Activated CD4-positive, alpha-beta memory T cell treated with anti-CD3 and anti-CD28 coated beads for 36 hours (primary cell): ENCODE measurements at regions of chr1 and their contacts with region 1.

Region 1: GRCh38 chr1:229661022-229661877 is 35.2 kb downstream of the URB2 start:
- DNase-seq: peak; percentile 83
- H3K4me3 Mint-ChIP-seq: no peak overlapping the region
- H3K27ac Mint-ChIP-seq: no peak overlapping the region
- H3K4me1 Mint-ChIP-seq: peaks cover 19% of the 10 kb centered on the region
- H3K27me3 Mint-ChIP-seq: no peaks in the 10 kb centered on the region

Region 2: DNA sequence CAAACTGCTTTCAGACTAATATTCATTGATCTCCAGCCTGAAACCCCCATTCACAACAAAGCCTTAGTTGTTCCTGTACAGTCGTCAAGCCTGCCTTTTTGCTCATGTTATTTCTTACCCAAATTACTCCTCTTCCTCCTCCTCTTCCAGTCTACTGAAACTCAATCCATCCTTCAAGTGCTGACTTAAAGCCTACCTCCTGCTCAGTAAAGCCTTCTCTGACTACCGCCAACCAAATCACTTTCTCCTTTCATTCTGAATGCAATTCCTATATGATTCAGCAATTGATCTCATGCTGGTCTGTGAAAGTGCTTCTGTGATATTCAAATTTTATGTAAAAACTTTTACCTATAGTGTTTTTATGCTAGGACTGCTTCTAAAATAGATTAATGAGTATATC is 53.9 kb before region 1 on chr1:
- CTCF ChIA-PET with region 1: no interaction called
- POLR2A ChIA-PET with region 1: no interaction called
- intact Hi-C with region 1: no loop called
- DNase-seq: no peak
- H3K4me3 Mint-ChIP-seq: no peak overlapping the region
- H3K27ac Mint-ChIP-seq: no peak overlapping the region
- H3K4me1 Mint-ChIP-seq: peaks cover 12% of the 10 kb centered on the region
- H3K27me3 Mint-ChIP-seq: no peaks in the 10 kb centered on the region

Region 3: GRCh38 chr1:229625915-229626831 is 35.1 kb before region 1 on chr1 and contains the starts of genes TAF5L and URB2:
- CTCF ChIA-PET with region 1: interaction called, 5 read pairs
- POLR2A ChIA-PET with region 1: no interaction called
- intact Hi-C with region 1: loop called (anchors 2 kb)
- DNase-seq: peak; percentile 91
- H3K4me3 Mint-ChIP-seq: peak within 1 kb of the TSS; percentile 99
- H3K27ac Mint-ChIP-seq: peak within 1 kb of the TSS; percentile 89
- H3K4me1 Mint-ChIP-seq: peaks cover 65% of the 10 kb centered on the region
- H3K27me3 Mint-ChIP-seq: no peaks in the 10 kb centered on the region
- total RNA-seq, gene TAF5L: 14.1 to 17.8 TPM
- total RNA-seq, gene URB2: 13.8 to 14.6 TPM

Region 4: DNA sequence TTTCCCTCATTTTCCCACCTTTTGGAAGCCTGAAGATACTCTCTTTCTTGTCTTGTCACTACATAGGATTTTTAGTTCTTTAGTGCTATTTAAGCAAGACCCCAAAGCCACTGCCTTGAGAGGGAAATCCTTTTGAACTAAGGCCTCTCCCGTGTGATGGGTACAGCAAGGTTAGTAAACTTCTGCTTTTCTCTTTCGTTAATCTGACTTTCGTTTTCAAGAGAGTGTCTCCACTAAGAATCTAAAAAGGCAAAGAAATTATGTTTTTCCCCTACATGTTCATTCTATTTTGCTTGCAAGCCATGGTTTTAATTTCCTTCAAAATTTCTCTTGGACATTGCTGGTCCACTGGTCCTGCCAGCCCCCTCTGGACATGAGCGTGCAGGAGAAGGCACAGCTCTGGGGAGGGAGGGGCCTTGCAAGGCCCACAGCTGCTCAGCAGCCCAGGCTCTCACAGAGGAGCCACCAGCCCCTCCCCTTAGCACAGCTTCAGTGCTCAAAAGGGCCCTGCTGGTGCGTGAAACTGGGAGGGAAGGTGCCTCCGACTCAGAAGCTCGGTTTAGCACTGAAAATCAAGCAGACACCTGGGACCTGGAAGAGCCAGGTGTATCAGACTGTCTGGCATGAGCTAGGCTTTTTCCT is 194.9 kb after region 1 on chr1:
- CTCF ChIA-PET with region 1: no interaction called
- POLR2A ChIA-PET with region 1: no interaction called
- intact Hi-C with region 1: loop called (anchors 10 kb)
- DNase-seq: peak; percentile 21
- H3K4me3 Mint-ChIP-seq: peak overlapping the region; percentile 37
- H3K27ac Mint-ChIP-seq: no peak overlapping the region
- H3K4me1 Mint-ChIP-seq: peaks cover 10% of the 10 kb centered on the region
- H3K27me3 Mint-ChIP-seq: peaks cover 3% of the 10 kb centered on the region

Region 5: GRCh38 chr1:230104395-230105244 is 443.4 kb after region 1 on chr1:
- CTCF ChIA-PET with region 1: interaction called, 3 read pairs
- POLR2A ChIA-PET with region 1: no interaction called
- intact Hi-C with region 1: loop called (anchors 2 kb)
- DNase-seq: peak; percentile 95
- H3K4me3 Mint-ChIP-seq: peak overlapping the region; percentile 66
- H3K27ac Mint-ChIP-seq: peak overlapping the region; percentile 86
- H3K4me1 Mint-ChIP-seq: peaks cover 80% of the 10 kb centered on the region
- H3K27me3 Mint-ChIP-seq: no peaks in the 10 kb centered on the region

Region 6: DNA sequence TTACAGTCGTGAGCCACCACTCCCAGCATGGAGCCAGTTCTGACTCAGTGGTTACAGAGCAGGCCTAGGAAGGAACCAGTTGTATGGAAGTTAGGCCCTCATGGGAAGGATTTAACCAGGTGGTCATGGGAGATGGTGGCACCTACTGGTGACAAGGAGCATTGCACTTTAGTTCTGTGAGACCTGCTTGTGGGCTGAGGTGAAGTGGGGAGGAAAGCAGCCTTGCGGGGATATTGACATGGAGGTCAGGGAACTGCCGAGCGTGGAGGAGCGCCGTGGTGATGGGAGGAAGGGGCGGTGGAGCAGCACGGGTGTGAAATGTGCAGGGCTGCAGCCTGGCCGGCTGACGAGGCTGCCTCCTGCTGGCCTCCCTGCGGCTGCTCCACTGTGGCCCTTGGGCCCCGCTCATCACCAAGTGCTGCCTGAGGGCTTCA is 506.2 kb after region 1 on chr1:
- CTCF ChIA-PET with region 1: interaction called, 21 read pairs
- POLR2A ChIA-PET with region 1: no interaction called
- intact Hi-C with region 1: loop called (anchors 1 kb)
- DNase-seq: peak; percentile 55
- H3K4me3 Mint-ChIP-seq: no peak overlapping the region
- H3K27ac Mint-ChIP-seq: no peak overlapping the region
- H3K4me1 Mint-ChIP-seq: peaks cover 34% of the 10 kb centered on the region
- H3K27me3 Mint-ChIP-seq: no peaks in the 10 kb centered on the region

Region 7: DNA sequence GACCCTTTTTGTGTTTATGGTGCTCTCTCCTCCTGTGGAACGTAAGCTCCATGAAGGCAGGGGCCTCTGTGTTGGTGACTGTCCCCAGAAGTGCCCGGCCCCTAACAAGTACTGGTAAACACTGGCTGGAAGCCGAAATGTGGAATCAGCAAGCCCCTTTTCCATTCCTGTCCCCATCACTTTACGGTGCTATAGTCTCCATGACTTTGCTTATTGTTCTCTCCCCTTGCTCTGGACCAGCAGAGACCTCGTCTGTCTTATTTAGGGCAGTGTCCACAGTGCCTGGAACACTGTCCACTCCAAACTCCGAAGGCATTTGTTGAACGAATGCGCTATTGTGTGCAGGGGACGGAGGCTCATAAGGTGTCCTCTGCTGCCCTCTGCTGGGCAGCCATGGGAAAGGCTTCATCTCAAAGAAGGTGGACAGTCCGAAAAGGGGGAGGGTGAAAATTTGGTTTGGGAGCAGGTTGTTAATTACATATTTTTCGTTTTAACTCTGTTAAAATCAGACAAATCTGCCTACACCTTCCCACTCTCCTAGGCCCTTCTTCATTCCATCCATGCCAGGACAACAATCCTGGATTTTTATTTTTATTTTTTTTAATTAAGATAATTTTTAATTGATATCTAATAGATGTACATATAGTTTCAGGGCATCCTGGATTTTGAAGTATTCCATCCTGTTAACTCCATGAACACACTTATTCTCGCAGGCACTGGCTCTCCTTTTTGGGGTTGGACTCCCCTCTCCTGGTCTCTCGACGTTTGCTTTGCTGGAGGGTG is 649.3 kb after region 1 on chr1:
- CTCF ChIA-PET with region 1: interaction called, 23 read pairs
- POLR2A ChIA-PET with region 1: interaction called, 4 read pairs
- intact Hi-C with region 1: loop called (anchors 1 kb)
- DNase-seq: peak; percentile 77
- H3K4me3 Mint-ChIP-seq: no peak overlapping the region
- H3K27ac Mint-ChIP-seq: no peak overlapping the region
- H3K4me1 Mint-ChIP-seq: peaks cover 14% of the 10 kb centered on the region
- H3K27me3 Mint-ChIP-seq: peaks cover 6% of the 10 kb centered on the region